Panc1 (cell line): ENCODE measurements at regions of chr12 and their contacts with region 1.

Region 1: GRCh38 chr12:121970581-121971300 is 50.9 kb upstream of the BCL7A start:
- DNase-seq: no peak
- ATAC-seq: no peak
- H3K4me3 ChIP-seq: no peak overlapping the region
- H3K27ac ChIP-seq: no peak overlapping the region
- H3K4me1 ChIP-seq: no peaks in the 10 kb centered on the region
- H3K27me3 ChIP-seq: no peaks in the 10 kb centered on the region
- CTCF ChIP-seq: no peak

Region 2: GRCh38 chr12:121939186-121939585 is 31.6 kb before region 1 on chr12:
- CTCF ChIA-PET with region 1: no interaction called
- POLR2A ChIA-PET with region 1: interaction called, 12 read pairs
- in situ Hi-C with region 1: no loop called
- intact Hi-C with region 1: no loop called
- DNase-seq: no peak
- ATAC-seq: no peak
- H3K4me3 ChIP-seq: no peak overlapping the region
- H3K27ac ChIP-seq: no peak overlapping the region
- H3K4me1 ChIP-seq: no peaks in the 10 kb centered on the region
- H3K27me3 ChIP-seq: no peaks in the 10 kb centered on the region
- CTCF ChIP-seq: no peak